ENCODE measurements at regions of chr17 and their contacts with region 1.

Region 1: GRCh38 chr17:80474231-80474960 is 2.0 kb downstream of the NPTX1 start:
- DNase-seq: peak; percentile 83
- ATAC-seq: peak; percentile 60
- H3K4me3 ChIP-seq: peak overlapping the region; percentile 56
- H3K27ac ChIP-seq: no peak overlapping the region
- H3K4me1 ChIP-seq: peaks cover 19% of the 10 kb centered on the region
- H3K27me3 ChIP-seq: peaks cover 44% of the 10 kb centered on the region
- CTCF ChIP-seq: peak; percentile 68

Region 2: DNA sequence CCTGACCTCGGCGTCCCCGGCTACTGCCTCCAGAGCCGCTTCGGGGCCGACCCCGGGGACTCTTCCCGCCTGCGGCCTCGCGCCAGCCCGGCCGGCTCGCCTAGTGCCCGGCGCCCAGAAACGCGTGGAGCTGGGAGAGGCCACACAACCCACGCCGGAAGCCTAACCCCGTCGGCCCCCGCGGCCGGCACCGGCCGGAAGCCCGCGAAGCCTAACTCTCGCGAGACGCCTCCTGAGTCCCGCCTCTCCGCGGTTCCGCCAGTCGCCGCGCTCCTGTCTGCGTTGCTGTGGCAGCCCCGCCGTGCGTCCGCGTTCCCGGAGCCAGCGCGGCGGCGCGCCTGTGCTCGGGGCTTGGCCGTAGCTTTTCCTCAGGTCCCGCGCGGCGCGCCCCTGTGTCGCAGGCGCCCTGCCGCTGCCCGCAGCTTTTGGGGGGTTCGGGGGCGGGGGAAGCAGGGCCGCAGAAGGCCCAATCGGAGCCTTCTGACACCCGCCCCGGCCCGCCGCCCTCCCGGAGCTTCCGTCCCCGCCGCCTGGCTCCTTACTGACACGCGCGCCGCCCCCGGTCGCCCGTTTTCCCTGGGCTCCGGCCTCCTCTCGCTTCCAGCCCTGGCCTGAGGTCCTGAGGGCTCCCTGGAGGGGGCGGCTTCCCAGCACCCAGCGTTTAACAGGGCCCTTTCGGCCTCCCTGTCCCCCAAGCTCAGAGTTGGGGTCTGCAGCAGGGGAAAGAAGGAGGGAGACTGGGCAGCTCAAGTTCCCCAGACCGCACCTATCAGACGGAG is 19.6 kb before region 1 on chr17:
- CTCF ChIA-PET with region 1: interaction called, 3 read pairs
- POLR2A ChIA-PET with region 1: interaction called, 12 read pairs
- intact Hi-C with region 1: no loop called
- DNase-seq: peak; percentile 99
- ATAC-seq: peak; percentile 91
- H3K4me3 ChIP-seq: peak overlapping the region; percentile 80
- H3K27ac ChIP-seq: peak overlapping the region; percentile 69
- H3K4me1 ChIP-seq: peaks cover 20% of the 10 kb centered on the region
- H3K27me3 ChIP-seq: no peaks in the 10 kb centered on the region
- CTCF ChIP-seq: no peak